ENCODE measurements at regions of chr5 and their contacts with region 1.

Region 1: GRCh38 chr5:135887351-135887864 is 8.2 kb downstream of the IL9 start:
- DNase-seq: peak; percentile 78
- H3K4me3 ChIP-seq: no peak overlapping the region
- H3K27ac ChIP-seq: no peak overlapping the region
- H3K4me1 ChIP-seq: 0 out of 2 replicates have a peak, but pooled peaks cover 6% of the 10 kb centered on the region
- H3K27me3 ChIP-seq: no peaks in the 10 kb centered on the region

Region 2: GRCh38 chr5:135085127-135085935 is 802.1 kb before region 1 on chr5:
- in situ Hi-C with region 1: no loop called
- DNase-seq: peak; percentile 37
- H3K4me3 ChIP-seq: no peak overlapping the region
- H3K27ac ChIP-seq: no peak overlapping the region
- H3K4me1 ChIP-seq: no peaks in the 10 kb centered on the region
- H3K27me3 ChIP-seq: peaks cover 21% of the 10 kb centered on the region

Region 3: DNA sequence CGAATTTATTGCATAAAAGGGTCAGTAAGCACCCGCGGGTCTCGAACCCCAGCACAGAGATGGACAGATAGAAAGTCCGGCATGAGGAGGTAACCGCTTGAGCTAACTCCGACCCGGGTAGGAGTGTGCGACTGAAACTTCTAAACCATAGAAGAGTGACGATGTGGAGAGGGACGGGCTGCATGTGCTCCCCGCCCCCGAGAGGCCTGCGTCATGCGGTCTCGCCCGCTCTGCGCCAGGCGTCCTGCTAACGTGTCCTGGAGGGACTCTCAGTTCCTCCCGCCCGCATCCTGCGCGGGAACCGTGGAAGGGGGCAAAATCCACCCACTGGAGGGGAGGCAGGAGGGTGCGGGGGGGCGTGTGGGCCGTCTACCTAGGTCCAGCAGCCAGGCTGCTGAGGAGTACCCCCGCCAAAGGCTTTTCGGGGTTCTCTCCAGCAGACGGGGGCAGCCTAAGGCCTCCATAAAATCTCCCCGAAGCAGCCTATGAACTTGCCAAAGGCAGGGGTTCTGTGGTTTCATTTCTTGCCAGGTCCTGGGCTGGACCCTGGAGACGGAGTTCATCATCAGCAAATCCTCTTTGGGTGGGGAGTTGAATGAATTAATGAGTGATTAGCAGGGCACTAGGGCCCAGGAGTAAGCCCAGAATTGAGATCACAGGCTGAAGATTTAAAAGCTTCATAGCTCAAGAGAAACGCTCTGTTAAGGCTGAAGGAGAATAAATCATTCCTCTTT is 193.2 kb after region 1 on chr5:
- in situ Hi-C with region 1: loop called (anchors 10 kb)
- DNase-seq: peak; percentile 91
- H3K4me3 ChIP-seq: peak overlapping the region; percentile 70
- H3K27ac ChIP-seq: peak overlapping the region; percentile 81
- H3K4me1 ChIP-seq: no peaks in the 10 kb centered on the region
- H3K27me3 ChIP-seq: no peaks in the 10 kb centered on the region

Region 4: DNA sequence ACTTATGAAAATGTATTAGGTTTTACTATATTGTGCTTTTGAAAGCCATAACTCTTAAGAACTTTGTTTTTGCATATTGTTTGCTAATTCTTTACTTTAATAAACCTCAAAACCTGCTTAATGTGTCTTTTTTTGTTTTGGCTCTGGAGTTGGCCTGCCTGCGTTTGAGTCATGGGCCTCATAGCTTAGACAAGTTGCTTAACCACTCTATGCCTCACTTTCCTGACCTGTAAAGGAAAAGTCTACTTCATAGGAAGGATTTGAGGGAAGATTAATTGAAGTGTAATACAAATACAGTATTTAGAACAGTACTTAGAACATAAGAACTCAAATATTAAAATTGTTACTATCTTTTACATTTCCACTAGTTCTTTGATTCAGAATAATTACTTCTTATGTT is 295.2 kb after region 1 on chr5:
- in situ Hi-C with region 1: loop called (anchors 10 kb)
- DNase-seq: peak; percentile 74
- H3K4me3 ChIP-seq: no peak overlapping the region
- H3K27ac ChIP-seq: no peak overlapping the region
- H3K4me1 ChIP-seq: no peaks in the 10 kb centered on the region
- H3K27me3 ChIP-seq: no peaks in the 10 kb centered on the region

Region 5: DNA sequence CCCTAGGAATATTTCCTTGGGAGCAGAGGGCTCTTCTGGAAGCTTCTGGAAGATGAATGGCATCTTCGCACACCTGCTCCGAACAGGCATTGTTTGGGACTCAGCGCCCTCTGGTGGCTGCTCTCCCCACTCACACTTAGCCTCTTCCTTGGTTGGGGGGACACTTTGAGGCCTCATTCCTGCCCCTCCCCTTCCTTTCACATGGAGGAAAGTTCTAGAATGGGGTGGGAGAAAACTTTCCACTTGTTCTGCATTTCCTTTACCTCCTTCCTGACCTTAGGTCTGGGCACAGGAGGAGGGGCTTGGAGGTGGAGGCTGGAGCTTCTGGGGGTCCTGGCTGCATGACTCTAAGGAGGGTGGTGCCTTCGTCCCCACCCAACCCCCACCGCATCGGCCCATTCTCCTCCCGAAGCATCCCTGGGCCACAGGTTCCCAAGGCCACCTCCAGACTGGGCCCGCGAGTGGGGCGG is 324.9 kb after region 1 on chr5:
- in situ Hi-C with region 1: loop called (anchors 5 kb)
- DNase-seq: peak; percentile 60
- H3K4me3 ChIP-seq: no peak overlapping the region
- H3K27ac ChIP-seq: no peak overlapping the region
- H3K4me1 ChIP-seq: no peaks in the 10 kb centered on the region
- H3K27me3 ChIP-seq: peaks cover 7% of the 10 kb centered on the region; the same call in 1 of the 2 replicates

Region 6: DNA sequence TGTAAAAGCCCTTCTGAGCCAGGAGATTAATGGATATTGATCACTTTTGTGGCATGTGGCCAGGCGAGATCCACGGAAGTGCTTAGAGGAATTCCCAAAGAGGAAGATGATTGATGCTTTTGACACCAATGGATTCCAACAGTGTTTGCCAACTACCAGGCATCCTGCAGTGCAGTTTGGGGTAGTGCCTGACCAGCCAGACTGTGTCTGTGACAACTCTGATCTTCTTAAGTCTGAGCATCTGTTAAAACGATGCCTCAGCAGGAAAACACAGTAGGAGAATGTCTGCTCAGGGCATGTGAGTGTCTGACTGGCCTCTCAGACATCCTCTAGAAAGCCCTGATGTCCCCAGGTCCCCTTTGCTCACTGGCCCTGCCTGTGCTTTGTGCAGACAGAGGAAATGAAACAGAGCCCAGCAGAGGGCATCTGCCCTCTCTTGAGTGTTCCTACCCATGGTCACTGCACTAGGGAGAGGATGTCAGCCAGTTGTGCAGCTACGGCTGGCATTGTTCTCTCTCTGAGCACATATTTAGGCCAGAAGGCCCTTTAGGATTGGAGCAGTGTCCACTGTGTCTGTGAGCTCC is 420.9 kb after region 1 on chr5:
- in situ Hi-C with region 1: no loop called
- DNase-seq: peak; percentile 7
- H3K4me3 ChIP-seq: no peak overlapping the region
- H3K27ac ChIP-seq: no peak overlapping the region
- H3K4me1 ChIP-seq: no peaks in the 10 kb centered on the region
- H3K27me3 ChIP-seq: peaks cover 5% of the 10 kb centered on the region; the same call in 1 of the 2 replicates

Region 7: GRCh38 chr5:136769900-136770684 is 882.7 kb after region 1 on chr5:
- in situ Hi-C with region 1: loop called (anchors 25 kb)
- DNase-seq: peak; percentile 83
- H3K4me3 ChIP-seq: no peak overlapping the region
- H3K27ac ChIP-seq: no peak overlapping the region
- H3K4me1 ChIP-seq: no peaks in the 10 kb centered on the region
- H3K27me3 ChIP-seq: peaks cover 15% of the 10 kb centered on the region; the same call in 1 of the 2 replicates